Activated CD4-positive, alpha-beta T cell treated with anti-CD3 and anti-CD28 coated beads, Interleukin-2, amount 10 ng/mL, durations not matched to agents 7 days and 5 days (primary cell): ENCODE measurements at regions of chr17 and their contacts with region 1.

Region 1: GRCh38 chr17:47970704-47971463 is at the start of gene CDK5RAP3:
- DNase-seq: peak; percentile 100
- H3K4me3 Mint-ChIP-seq: peak within 1 kb of the TSS; percentile 94
- H3K27ac Mint-ChIP-seq: peak within 1 kb of the TSS; percentile 89
- H3K4me1 Mint-ChIP-seq: peaks cover 30% of the 10 kb centered on the region
- H3K27me3 Mint-ChIP-seq: peaks cover 2% of the 10 kb centered on the region
- total RNA-seq, gene CDK5RAP3: 212 to 213 TPM

Region 2: DNA sequence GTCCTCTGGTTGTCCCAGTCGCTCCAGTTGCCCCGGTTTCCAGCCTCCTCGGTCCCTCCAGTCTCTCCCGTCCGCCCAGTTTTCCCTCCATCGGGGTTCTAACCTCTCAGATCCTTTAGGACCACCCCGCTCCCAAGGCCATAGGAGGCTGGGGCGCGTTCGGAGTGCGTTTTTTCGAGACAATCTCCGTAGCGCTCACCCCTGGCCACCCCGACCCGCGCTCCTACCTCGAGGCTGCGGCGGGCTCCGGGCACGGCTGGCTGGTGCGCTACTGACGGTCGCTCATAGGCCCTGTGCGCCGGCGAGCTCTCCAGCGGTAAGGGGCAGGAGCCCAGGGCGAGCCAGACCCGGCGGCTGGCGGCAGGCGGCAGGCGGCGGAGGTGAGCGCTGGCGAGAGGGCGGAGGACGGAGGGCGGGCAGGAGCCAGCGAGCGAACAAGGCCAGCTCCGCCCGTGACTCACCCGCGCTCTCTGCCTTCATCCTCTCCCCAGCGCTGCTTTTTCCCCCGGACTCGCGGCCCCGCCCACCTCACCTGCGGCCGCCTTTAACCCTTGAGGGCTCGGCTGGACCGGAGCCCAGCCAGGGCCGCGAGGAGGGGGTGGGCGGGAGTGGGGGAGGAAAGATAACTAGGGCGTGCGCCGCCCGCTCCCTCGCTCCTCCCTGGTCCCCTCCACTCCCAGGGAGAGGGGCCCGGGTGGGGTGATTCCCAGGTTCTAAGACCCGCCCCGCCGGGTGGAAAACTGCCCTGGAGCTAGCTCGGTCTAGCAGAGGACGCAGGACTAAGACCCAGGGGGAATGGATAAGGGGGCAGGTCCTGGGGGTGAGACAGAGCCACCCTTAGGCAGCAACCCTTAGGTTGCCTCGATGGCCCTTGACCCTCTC is 120.0 kb before region 1 on chr17 and contains the start of gene SP6:
- CTCF ChIA-PET with region 1: interaction called, 19 read pairs
- POLR2A ChIA-PET with region 1: no interaction called
- DNase-seq: peak; percentile 49
- H3K4me3 Mint-ChIP-seq: peak within 1 kb of the TSS; percentile 15
- H3K27ac Mint-ChIP-seq: no peak within 1 kb of the TSS
- H3K4me1 Mint-ChIP-seq: peaks cover 20% of the 10 kb centered on the region
- H3K27me3 Mint-ChIP-seq: peaks cover 90% of the 10 kb centered on the region
- total RNA-seq, gene SP6: not detected

Region 3: GRCh38 chr17:47941236-47941994 is 29.5 kb before region 1 on chr17 and contains the start of gene PNPO:
- CTCF ChIA-PET with region 1: interaction called, 142 read pairs
- POLR2A ChIA-PET with region 1: interaction called, 3 read pairs
- DNase-seq: peak; percentile 98
- H3K4me3 Mint-ChIP-seq: peak within 1 kb of the TSS; percentile 91
- H3K27ac Mint-ChIP-seq: peak within 1 kb of the TSS; percentile 85
- H3K4me1 Mint-ChIP-seq: peaks cover 49% of the 10 kb centered on the region
- H3K27me3 Mint-ChIP-seq: no peaks in the 10 kb centered on the region
- total RNA-seq, gene PNPO: 30.9 to 36.5 TPM

Region 4: GRCh38 chr17:47949136-47949759 is 21.6 kb before region 1 on chr17:
- CTCF ChIA-PET with region 1: interaction called, 142 read pairs
- POLR2A ChIA-PET with region 1: interaction called, 5 read pairs
- DNase-seq: peak; percentile 84
- H3K4me3 Mint-ChIP-seq: peak overlapping the region; percentile 45
- H3K27ac Mint-ChIP-seq: peak overlapping the region; percentile 75
- H3K4me1 Mint-ChIP-seq: peaks cover 37% of the 10 kb centered on the region
- H3K27me3 Mint-ChIP-seq: no peaks in the 10 kb centered on the region

Region 5: GRCh38 chr17:47957591-47958428 is 13.1 kb before region 1 on chr17 and contains the start of gene PRR15L:
- CTCF ChIA-PET with region 1: interaction called, 142 read pairs
- POLR2A ChIA-PET with region 1: no interaction called
- DNase-seq: no peak
- H3K4me3 Mint-ChIP-seq: no peak within 1 kb of the TSS
- H3K27ac Mint-ChIP-seq: no peak within 1 kb of the TSS
- H3K4me1 Mint-ChIP-seq: no peaks in the 10 kb centered on the region
- H3K27me3 Mint-ChIP-seq: no peaks in the 10 kb centered on the region
- total RNA-seq, gene PRR15L: not detected

Region 6: GRCh38 chr17:47999582-47999981 is 28.7 kb after region 1 on chr17:
- CTCF ChIA-PET with region 1: interaction called, 11 read pairs
- POLR2A ChIA-PET with region 1: no interaction called
- DNase-seq: no peak
- H3K4me3 Mint-ChIP-seq: no peak overlapping the region
- H3K27ac Mint-ChIP-seq: no peak overlapping the region
- H3K4me1 Mint-ChIP-seq: peaks cover 10% of the 10 kb centered on the region
- H3K27me3 Mint-ChIP-seq: peaks cover 14% of the 10 kb centered on the region

Region 7: GRCh38 chr17:48011405-48012150 is 40.7 kb after region 1 on chr17:
- CTCF ChIA-PET with region 1: interaction called, 26 read pairs
- POLR2A ChIA-PET with region 1: no interaction called
- DNase-seq: peak; percentile 73
- H3K4me3 Mint-ChIP-seq: peak overlapping the region; percentile 64
- H3K27ac Mint-ChIP-seq: peak overlapping the region; percentile 58
- H3K4me1 Mint-ChIP-seq: peaks cover 24% of the 10 kb centered on the region
- H3K27me3 Mint-ChIP-seq: peaks cover 46% of the 10 kb centered on the region